PC-9 (cell line): ENCODE measurements at regions of chr13 and their contacts with region 1.

Region 1: GRCh38 chr13:48037346-48038173 is at the start of gene NUDT15:
- DNase-seq: peak; percentile 87 to 93
- H3K4me3 ChIP-seq: peak within 1 kb of the TSS; percentile 66
- H3K27ac ChIP-seq: peak within 1 kb of the TSS; percentile 90
- H3K4me1 ChIP-seq: peaks cover 35% of the 10 kb centered on the region
- H3K27me3 ChIP-seq: no peaks in the 10 kb centered on the region
- CTCF ChIP-seq: peak; percentile 97
- total RNA-seq, gene NUDT15: 13.4 and 16.1 TPM in 2 replicates

Region 2: GRCh38 chr13:47794963-47795362 is 242.6 kb before region 1 on chr13:
- CTCF ChIA-PET with region 1: no interaction called
- POLR2A ChIA-PET with region 1: no interaction called
- intact Hi-C with region 1: loop called (anchors 5 kb)
- DNase-seq: no peak
- H3K4me3 ChIP-seq: no peak overlapping the region
- H3K27ac ChIP-seq: no peak overlapping the region
- H3K4me1 ChIP-seq: no peaks in the 10 kb centered on the region
- H3K27me3 ChIP-seq: no peaks in the 10 kb centered on the region
- CTCF ChIP-seq: peak; percentile 64

Region 3: DNA sequence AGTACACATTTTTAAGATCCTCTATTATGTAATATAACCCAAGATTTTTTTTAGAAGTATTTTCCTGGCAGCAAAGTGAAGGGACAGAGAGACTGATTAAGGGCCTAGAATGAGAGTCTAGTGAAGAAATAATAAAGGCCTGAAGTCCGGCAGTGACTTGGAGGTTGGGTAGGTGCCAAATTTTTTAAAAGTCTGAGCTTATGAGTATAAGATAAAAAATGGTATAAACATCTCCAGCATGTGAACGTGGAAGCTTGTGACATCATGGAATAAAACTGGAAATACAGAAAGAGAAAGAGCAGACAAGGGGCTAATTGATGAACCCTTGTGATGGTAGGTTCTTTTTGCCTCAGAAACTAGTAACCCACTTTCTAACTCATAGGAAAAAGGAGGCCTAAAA is 211.1 kb before region 1 on chr13:
- CTCF ChIA-PET with region 1: no interaction called
- POLR2A ChIA-PET with region 1: interaction called, 12 read pairs
- intact Hi-C with region 1: no loop called
- DNase-seq: no peak
- H3K4me3 ChIP-seq: no peak overlapping the region
- H3K27ac ChIP-seq: no peak overlapping the region
- H3K4me1 ChIP-seq: no peaks in the 10 kb centered on the region
- H3K27me3 ChIP-seq: no peaks in the 10 kb centered on the region
- CTCF ChIP-seq: no peak

Region 4: DNA sequence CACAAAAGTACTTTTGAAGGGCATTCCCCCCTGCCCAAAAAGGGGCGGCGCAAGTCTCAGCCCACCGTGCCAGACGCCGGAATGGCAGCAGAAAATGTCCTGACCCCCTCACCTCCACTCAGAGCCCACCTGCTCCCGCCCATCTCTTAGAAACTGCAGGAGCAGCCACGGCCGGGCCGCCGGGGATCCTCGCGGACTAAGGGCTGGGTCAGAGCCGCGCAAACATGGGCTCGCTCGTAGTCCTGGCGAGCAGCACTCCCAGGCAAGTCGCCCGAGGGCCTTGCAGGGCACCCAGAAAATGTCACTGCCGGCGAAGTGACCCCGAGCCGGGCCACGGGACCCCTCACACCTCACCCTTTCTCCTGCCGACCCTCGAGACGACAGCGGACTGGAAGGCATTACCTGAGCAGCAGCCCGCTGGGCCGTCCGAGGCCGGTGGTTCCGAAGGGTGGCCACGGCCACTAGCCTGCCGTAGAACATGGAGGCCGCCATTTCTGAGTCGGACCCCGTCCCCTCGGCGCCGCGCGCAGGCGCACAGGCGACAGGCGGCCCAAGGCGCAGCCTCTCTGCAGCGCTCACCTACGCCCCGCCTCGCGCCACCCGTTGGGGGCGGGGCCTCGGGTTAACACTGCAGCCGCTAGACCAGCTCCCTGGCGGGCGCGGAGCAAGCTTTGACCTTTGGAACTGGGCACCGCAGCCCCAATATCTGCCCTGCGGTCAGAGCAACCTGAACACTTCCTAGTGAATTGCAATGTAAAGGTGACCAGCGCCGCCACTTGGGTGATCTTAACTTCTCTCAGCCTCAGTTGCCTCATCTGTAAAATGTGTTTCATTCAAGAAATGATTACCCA is 36.6 kb before region 1 on chr13 and contains the start of gene SUCLA2:
- CTCF ChIA-PET with region 1: interaction called, 5 read pairs
- POLR2A ChIA-PET with region 1: no interaction called
- intact Hi-C with region 1: loop called (anchors 1 kb)
- DNase-seq: peak; percentile 76 to 90
- H3K4me3 ChIP-seq: peak within 1 kb of the TSS; percentile 86
- H3K27ac ChIP-seq: peak within 1 kb of the TSS; percentile 54
- H3K4me1 ChIP-seq: peaks cover 25% of the 10 kb centered on the region
- H3K27me3 ChIP-seq: no peaks in the 10 kb centered on the region
- CTCF ChIP-seq: no peak
- total RNA-seq, gene SUCLA2: 32.0 and 44.8 TPM in 2 replicates

Region 5: DNA sequence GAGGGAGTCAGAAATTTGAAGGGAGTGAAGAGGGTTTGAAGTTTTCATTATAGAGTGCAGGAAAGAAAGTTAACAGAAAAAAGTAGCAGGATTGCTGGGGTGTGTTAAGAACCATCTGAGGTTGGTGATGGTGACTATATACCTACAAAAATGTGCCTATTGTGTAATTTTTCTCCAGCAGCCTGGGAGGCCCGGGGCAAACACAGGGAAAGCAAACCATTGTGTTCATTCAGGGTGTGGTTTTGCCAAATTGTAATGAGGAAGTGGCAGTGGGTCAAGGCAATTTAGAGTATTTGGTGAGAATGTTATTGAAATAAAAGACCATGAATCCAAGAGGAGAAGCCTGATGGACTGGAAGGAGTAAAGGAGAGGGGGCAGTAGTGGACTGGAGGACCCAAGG is 28.3 kb before region 1 on chr13:
- CTCF ChIA-PET with region 1: no interaction called
- POLR2A ChIA-PET with region 1: no interaction called
- intact Hi-C with region 1: loop called (anchors 2 kb)
- DNase-seq: peak; percentile 67 to 97
- H3K4me3 ChIP-seq: peak overlapping the region; percentile 9; the same call in 1 of the 2 replicates
- H3K27ac ChIP-seq: peak overlapping the region; percentile 68
- H3K4me1 ChIP-seq: peaks cover 41% of the 10 kb centered on the region
- H3K27me3 ChIP-seq: no peaks in the 10 kb centered on the region
- CTCF ChIP-seq: no peak

Region 6: DNA sequence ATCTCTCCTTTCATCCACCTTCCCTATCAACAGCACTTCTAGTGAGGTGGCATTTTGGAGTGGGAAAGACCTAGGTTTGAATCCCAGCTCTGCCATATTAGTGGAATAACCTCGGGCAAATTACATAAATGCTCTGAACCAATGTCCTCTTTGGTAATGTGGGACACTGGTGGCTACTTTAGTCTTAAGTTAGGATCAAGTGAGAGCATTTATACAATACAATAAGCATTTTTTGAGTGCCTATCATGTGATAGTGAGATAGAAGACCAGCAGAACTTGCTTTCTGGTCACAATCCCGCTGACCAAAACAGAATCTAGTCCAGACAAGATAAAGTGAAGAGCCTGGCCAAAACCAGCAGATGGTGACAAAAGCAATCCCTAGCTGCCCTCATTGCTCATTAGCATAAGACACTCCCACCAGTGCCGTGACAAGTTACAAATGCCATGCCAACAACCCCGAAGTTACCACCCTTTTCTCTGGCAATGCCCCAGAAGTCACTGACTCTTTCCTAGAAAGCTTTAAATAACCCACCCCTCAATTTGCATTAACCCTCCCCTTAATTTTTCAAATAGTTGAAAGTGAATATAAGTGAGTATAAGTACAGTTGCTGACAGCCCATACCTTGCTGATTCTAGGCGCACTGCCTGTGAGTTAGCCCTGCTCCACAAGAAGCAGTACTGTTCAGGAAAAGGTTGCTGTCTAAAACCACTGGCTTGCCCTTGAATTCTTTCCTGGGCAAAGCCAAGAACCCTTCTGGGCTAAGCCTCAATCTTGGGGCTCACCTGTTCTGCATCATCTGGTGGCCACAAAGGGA is 1783.9 kb after region 1 on chr13:
- CTCF ChIA-PET with region 1: interaction called, 12 read pairs
- POLR2A ChIA-PET with region 1: no interaction called
- intact Hi-C with region 1: no loop called
- DNase-seq: peak in 1 of 2 experiments; percentile 4
- H3K4me3 ChIP-seq: no peak overlapping the region
- H3K27ac ChIP-seq: no peak overlapping the region
- H3K4me1 ChIP-seq: no peaks in the 10 kb centered on the region
- H3K27me3 ChIP-seq: no peaks in the 10 kb centered on the region
- CTCF ChIP-seq: no peak